ENCODE measurements at regions of chr6 and their contacts with region 1.

Region 1: DNA sequence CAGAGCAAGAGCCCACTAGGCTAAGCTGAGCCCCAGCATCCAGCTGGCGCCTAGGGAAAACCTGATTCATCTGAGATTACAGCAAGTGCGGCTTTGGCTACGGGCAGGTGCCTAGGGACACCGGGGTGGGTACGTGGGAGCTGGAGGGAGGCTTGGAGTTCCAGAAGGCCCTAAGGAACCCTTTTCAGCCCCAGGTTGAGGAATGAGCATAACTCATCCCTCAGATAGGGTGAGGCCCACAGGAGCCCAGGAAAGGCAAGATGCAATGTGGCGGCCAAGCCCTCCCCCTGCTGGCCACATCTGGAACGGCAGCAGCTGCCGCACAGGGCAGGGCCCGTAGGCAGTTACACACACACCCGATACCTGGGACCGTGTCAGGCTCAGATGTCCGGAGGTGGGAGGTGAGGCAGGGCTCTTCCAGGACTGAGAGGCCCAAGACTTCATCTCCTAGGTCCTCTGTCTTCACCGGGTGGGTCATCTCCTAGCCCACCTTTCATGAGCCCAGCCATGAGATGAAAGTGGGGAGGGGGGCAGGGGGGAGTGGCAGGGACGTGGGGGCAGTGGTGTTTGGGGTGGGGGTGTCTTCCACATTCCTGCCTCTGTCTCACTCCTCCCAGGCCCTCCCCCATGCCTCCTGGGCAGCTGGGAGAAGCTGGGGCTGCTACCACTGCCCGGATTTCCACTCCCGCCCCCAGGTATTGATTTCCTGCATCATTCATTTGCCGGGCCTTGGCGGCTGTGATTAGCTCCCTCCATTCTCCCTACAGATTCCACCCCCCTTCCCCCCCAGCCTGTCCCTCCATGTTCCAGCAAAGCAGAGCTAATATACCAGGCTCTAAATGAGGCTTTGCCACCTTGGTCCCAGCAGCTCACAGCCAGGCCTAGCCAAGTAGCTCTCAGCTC is 5.5 kb downstream of the MDGA1 start:
- DNase-seq: peak; percentile 79
- H3K4me3 ChIP-seq: no peak overlapping the region
- H3K27ac ChIP-seq: no peak overlapping the region
- H3K4me1 ChIP-seq: peaks cover 0 to 22% (median 20%) of the 10 kb centered on the region in 4 donors
- H3K27me3 ChIP-seq: peaks cover 0 to 20% (median 16%) of the 10 kb centered on the region in 3 donors
- CTCF ChIP-seq: peak; percentile 75 to 98 (median 92)
- EP300 ChIP-seq: no peak
- POLR2A ChIP-seq: no peak

Region 2: GRCh38 chr6:37324131-37325033 is 367.8 kb before region 1 on chr6:
- intact Hi-C with region 1: loop called (anchors 2 kb)
- DNase-seq: no peak
- H3K4me3 ChIP-seq: no peak overlapping the region
- H3K27ac ChIP-seq: peak overlapping the region in 3 of 4 donors; percentile 3 to 56 (median 44)
- H3K4me1 ChIP-seq: peaks cover 0 to 25% (median 21%) of the 10 kb centered on the region in 4 donors
- H3K27me3 ChIP-seq: no peaks in the 10 kb centered on the region
- CTCF ChIP-seq: no peak
- EP300 ChIP-seq: no peak
- POLR2A ChIP-seq: no peak

Region 3: GRCh38 chr6:37381579-37381978 is 310.6 kb before region 1 on chr6:
- intact Hi-C with region 1: loop called (anchors 10 kb)
- DNase-seq: no peak
- H3K4me3 ChIP-seq: no peak overlapping the region
- H3K27ac ChIP-seq: no peak overlapping the region
- H3K4me1 ChIP-seq: no peaks in the 10 kb centered on the region
- H3K27me3 ChIP-seq: no peaks in the 10 kb centered on the region
- CTCF ChIP-seq: peak in 3 of 4 experiments; percentile 25 to 52 (median 38)
- EP300 ChIP-seq: no peak
- POLR2A ChIP-seq: no peak

Region 4: GRCh38 chr6:37489660-37490361 is 202.3 kb before region 1 on chr6:
- intact Hi-C with region 1: loop called (anchors 5 kb)
- DNase-seq: peak; percentile 61
- H3K4me3 ChIP-seq: no peak overlapping the region
- H3K27ac ChIP-seq: no peak overlapping the region
- H3K4me1 ChIP-seq: peaks cover 0 to 23% (median 17%) of the 10 kb centered on the region in 4 donors
- H3K27me3 ChIP-seq: no peaks in the 10 kb centered on the region
- CTCF ChIP-seq: peak in 1 of 4 experiments; percentile 11
- EP300 ChIP-seq: no peak
- POLR2A ChIP-seq: no peak

Region 5: GRCh38 chr6:37566111-37566949 is 125.8 kb before region 1 on chr6:
- intact Hi-C with region 1: loop called (anchors 5 kb)
- DNase-seq: no peak
- H3K4me3 ChIP-seq: peak overlapping the region; percentile 18 to 48 (median 31)
- H3K27ac ChIP-seq: no peak overlapping the region
- H3K4me1 ChIP-seq: peaks cover 0 to 12% (median 9%) of the 10 kb centered on the region in 4 donors
- H3K27me3 ChIP-seq: peaks cover 0 to 41% (median 9%) of the 10 kb centered on the region in 3 donors
- CTCF ChIP-seq: peak; percentile 70 to 88 (median 77)
- EP300 ChIP-seq: no peak
- POLR2A ChIP-seq: no peak

Measured in sigmoid colon (tissue), 7 donors.